ENCODE measurements at regions of chr18 and their contacts with region 1.

Region 1: GRCh38 chr18:21191596-21192307 is 50.3 kb upstream of the GREB1L start:
- DNase-seq: peak in 4 of 5 donors; percentile 35 to 60 (median 48)
- H3K4me3 ChIP-seq: no peak overlapping the region
- H3K27ac ChIP-seq: no peak overlapping the region
- H3K4me1 ChIP-seq: no peaks in the 10 kb centered on the region
- H3K27me3 ChIP-seq: no peaks in the 10 kb centered on the region
- CTCF ChIP-seq: peak; percentile 30

Region 2: GRCh38 chr18:21444465-21445023 is 252.8 kb after region 1 on chr18:
- intact Hi-C with region 1: loop called (anchors 10 kb)
- DNase-seq: peak in 2 of 5 donors; percentile 66 to 78
- H3K4me3 ChIP-seq: no peak overlapping the region
- H3K27ac ChIP-seq: no peak overlapping the region
- H3K4me1 ChIP-seq: no peaks in the 10 kb centered on the region
- H3K27me3 ChIP-seq: no peaks in the 10 kb centered on the region
- CTCF ChIP-seq: peak; percentile 43

Region 3: DNA sequence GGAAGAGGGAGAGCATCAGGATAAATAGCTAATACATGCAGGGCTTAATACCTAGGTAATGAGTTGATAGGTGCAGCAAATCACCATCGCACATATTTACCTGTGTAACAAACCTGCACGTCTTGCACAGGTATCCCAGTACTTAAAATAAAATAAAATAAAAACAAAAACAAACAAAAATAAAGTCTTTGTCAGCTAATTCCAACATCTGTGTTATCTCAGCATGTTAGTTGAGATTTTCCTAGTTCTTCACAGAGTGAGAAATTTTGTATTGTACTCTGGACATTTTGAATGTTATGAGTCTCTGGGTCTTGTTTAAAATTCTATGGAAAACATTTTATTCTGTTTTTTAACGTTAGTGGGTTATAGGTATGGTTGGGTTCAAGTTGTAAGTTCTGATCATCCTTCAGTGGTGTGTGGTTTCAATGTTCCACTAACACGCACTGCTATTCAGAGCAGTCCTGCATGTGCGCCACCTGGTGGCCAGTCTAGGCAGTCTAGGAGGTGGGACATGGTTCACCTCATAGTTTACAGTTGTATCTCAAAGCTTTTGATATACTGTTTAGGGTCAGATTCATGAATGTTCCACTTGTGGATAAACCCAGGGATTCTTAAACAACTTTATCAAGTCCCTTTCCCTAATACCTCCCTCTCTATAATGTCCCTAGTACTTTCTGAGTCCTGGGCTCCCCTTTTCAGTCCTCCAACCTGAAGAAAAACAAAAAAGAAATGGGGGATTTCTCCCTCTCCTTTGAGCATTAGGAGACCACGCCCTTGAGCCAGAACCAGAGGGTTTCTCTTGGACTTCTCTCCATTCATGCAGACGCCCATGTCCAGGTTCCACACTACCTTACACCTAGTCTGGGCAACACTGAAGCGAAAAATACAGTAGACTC is 764.3 kb after region 1 on chr18:
- intact Hi-C with region 1: loop called (anchors 10 kb)
- DNase-seq: peak; percentile 70 to 91 (median 71)
- H3K4me3 ChIP-seq: no peak overlapping the region
- H3K27ac ChIP-seq: no peak overlapping the region
- H3K4me1 ChIP-seq: no peaks in the 10 kb centered on the region
- H3K27me3 ChIP-seq: no peaks in the 10 kb centered on the region
- CTCF ChIP-seq: peak; percentile 76

Measured in kidney (tissue), 22 donors.